KBM-7 (cell line): ENCODE measurements at regions of chr2 and their contacts with region 1.

Region 1: GRCh38 chr2:216666461-216667233 is 28.7 kb downstream of the IGFBP5 start:
- DNase-seq: peak; percentile 86

Region 2: DNA sequence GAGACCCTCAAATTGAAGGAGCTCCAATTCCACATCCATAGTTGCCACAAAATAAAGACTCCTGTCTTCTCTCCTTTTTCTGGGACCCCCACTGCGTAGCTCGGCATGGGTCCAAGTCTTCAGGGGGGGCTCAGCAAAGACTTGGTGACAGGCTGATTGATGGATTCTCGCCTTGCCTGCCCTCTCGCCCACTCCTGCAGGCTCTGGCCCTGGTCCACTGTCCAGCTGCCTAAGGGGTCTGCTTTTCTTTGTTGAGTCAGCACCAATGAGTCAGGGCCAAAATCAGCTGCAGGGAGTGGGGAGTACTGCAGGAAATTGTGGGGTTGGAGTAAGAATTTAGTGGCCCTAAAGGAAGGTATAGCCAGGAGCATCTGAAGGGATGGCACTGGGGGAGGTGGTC is 146.5 kb before region 1 on chr2:
- in situ Hi-C with region 1: loop called (anchors 10 kb)
- DNase-seq: no peak